Posterior vena cava (tissue), 2 donors: ENCODE measurements at regions of chr5 and their contacts with region 1.

Region 1: GRCh38 chr5:71882826-71883744 is 164.0 kb downstream of the CARTPT start:
- DNase-seq: no peak

Region 2: DNA sequence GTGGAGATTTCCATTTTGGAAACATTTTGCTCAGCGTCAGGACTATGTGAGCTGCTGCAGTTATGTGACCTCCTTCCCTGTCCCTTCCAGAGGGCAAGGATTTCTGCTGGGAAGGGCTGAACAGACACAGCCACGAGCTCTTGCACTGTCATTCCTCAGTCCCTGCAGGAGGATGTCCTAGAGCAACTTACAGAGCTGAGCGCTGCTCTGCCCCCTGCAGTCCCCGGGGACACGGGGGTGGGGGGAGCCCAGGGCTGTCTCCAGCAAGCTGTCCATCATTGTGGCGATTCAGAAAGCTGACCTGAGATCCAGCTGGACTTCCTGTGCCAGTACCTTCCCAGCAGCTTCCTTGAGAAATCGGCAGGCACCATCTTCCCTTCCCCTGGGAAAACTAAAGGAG is 196.2 kb after region 1 on chr5:
- intact Hi-C with region 1: no loop called
- DNase-seq: no peak

Region 3: GRCh38 chr5:73464016-73464745 is 1581.1 kb after region 1 on chr5:
- intact Hi-C with region 1: loop called in 1 of 2 experiments (anchors 5 kb)
- DNase-seq: no peak